HAP-1 (cell line): ENCODE measurements at regions of chr19 and their contacts with region 1.

Region 1: GRCh38 chr19:7705387-7706187 is 3.7 kb upstream of the FCER2 start:
- DNase-seq: no peak
- H3K4me3 ChIP-seq: no peak overlapping the region
- H3K4me1 ChIP-seq: no peaks in the 10 kb centered on the region
- H3K27me3 ChIP-seq: no peaks in the 10 kb centered on the region; the same call in 1 of the 2 replicates

Region 2: GRCh38 chr19:7778081-7778480 is 72.5 kb after region 1 on chr19:
- in situ Hi-C with region 1: loop called (anchors 5 kb)
- DNase-seq: no peak
- H3K4me3 ChIP-seq: no peak overlapping the region
- H3K4me1 ChIP-seq: no peaks in the 10 kb centered on the region
- H3K27me3 ChIP-seq: peaks cover 38% of the 10 kb centered on the region

Region 3: DNA sequence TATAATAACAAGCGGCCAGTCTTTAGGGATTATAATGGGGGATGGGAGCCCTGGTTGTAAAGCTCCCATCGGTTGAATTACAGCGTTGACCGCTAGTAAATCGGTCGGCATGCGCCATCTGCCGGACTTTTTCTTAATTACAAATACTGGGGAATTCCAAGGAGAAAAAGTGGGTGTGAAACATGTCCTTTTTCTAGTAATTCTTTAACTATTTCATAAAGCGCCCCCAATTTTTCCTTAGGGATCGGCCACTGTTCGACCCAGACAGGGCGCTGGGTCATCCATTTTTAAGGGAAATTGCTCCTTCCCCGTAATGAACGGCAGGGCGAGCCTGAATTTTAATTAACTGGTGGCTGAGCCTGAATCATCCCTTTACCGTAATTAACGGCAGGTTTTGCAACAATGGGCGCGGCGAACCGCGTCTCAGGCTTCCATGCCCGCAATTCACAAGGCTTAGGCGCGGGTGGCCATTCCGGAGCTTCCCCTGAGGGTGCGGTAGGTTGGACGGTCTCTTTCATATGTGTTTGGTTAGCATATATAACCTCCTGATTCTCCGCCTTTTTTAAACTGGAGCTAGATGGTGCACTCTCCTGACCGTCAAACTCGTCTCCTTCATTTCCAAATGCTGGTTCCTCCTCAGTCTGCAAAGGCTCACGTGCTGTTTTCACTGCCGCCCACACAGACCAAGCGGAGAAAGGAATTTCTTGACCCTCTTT is 94.2 kb after region 1 on chr19:
- in situ Hi-C with region 1: no loop called
- DNase-seq: peak; percentile 84 to 89
- H3K4me3 ChIP-seq: peak overlapping the region; percentile 10; the same call in 1 of the 2 replicates
- H3K4me1 ChIP-seq: peaks cover 16% of the 10 kb centered on the region
- H3K27me3 ChIP-seq: peaks cover 3% of the 10 kb centered on the region; the same call in 1 of the 2 replicates